ENCODE measurements at regions of chr6 and their contacts with region 1.

Region 1: DNA sequence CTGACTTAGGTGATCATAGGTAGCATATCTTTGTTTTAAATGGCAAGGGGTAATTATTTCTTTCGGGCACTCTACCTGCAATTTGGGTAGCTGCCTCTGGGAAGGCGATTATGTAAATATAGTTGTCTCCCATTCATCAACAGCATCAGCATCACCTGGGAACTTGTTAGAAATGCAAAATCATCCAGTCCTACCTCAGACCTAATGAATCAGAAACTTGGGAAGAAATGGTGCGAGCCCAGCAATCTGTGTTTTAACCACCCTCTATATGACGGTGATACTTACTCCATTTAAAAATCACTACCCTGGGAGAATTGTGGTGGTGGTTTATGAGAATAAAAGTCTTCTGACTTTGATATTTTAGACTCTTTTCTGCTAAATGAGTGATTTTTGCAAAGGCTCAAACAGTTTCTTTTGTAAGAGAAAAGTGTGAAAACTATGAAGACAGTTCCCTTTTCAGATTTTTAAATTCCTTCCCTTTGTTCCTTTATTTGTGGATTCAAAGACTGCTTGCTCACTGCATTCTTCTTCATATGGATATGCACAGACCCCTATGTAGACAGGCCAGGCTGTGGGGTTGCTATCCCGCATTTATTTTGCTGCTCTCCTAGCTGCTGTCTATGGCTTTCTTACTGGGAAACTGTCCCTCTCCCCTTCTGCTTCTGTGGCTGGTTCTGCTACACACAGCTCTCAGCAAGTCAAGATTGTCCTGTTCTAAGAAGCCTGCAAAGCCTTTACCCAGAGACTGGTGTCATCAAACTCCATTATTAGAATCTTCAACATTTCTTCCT is 365.3 kb downstream of the RNF144B start:
- DNase-seq: no peak
- ATAC-seq: no peak
- H3K4me3 ChIP-seq: no peak overlapping the region
- H3K4me3 Mint-ChIP-seq: no peak overlapping the region
- H3K27ac ChIP-seq: no peak overlapping the region
- H3K27ac Mint-ChIP-seq: no peak overlapping the region
- H3K4me1 ChIP-seq: no peaks in the 10 kb centered on the region
- H3K4me1 Mint-ChIP-seq: no peaks in the 10 kb centered on the region
- H3K27me3 ChIP-seq: no peaks in the 10 kb centered on the region
- H3K27me3 Mint-ChIP-seq: peaks cover 2% of the 10 kb centered on the region
- CTCF ChIP-seq: no peak

Region 2: DNA sequence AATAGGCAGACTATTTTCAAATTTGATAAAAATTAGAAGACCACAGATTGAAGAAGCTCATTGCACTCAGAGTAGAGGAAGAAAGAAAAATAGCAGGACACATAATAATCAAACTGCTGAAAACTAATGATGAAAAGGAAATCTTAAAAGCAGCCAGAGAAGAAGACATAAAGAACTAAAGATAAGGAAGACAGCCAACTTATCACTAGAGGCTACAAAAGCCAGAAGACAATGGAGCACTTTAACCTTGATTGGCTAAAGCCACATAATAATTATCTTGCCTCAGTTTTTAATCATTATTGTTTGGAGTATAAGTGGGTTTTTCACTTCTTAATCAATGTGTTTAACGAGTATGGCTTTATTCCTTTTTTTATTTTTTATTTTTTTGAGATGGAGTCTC is 32.3 kb after region 1 on chr6:
- CTCF ChIA-PET with region 1: no interaction called
- POLR2A ChIA-PET with region 1: no interaction called
- intact Hi-C with region 1: loop called in 1 of 2 experiments (anchors 1 kb)
- DNase-seq: no peak
- ATAC-seq: no peak
- H3K4me3 ChIP-seq: no peak overlapping the region
- H3K4me3 Mint-ChIP-seq: no peak overlapping the region
- H3K27ac ChIP-seq: no peak overlapping the region
- H3K27ac Mint-ChIP-seq: no peak overlapping the region
- H3K4me1 ChIP-seq: no peaks in the 10 kb centered on the region
- H3K4me1 Mint-ChIP-seq: no peaks in the 10 kb centered on the region
- H3K27me3 ChIP-seq: no peaks in the 10 kb centered on the region
- H3K27me3 Mint-ChIP-seq: no peaks in the 10 kb centered on the region
- CTCF ChIP-seq: no peak

Measured in CD8-positive, alpha-beta T cell (primary cell).